Natural killer cell (primary cell): ENCODE measurements at regions of chr9 and their contacts with region 1.

Region 1: GRCh38 chr9:128771745-128772519 is at the start of gene ZER1:
- DNase-seq: peak; percentile 95 to 96
- ATAC-seq: peak; percentile 90 to 97 (median 93)
- H3K4me3 ChIP-seq: peak within 1 kb of the TSS; percentile 99
- H3K4me3 Mint-ChIP-seq: peak within 1 kb of the TSS; percentile 97
- H3K27ac ChIP-seq: peak within 1 kb of the TSS; percentile 95
- H3K27ac Mint-ChIP-seq: peak within 1 kb of the TSS; percentile 92 to 99
- H3K4me1 ChIP-seq: peaks cover 25% of the 10 kb centered on the region
- H3K4me1 Mint-ChIP-seq: peaks cover 28 to 34% of the 10 kb centered on the region in 2 donors
- H3K27me3 ChIP-seq: no peaks in the 10 kb centered on the region
- H3K27me3 Mint-ChIP-seq: peaks cover 0 to 5% of the 10 kb centered on the region in 2 donors
- CTCF ChIP-seq: no peak
- total RNA-seq, gene ZER1: 35.0 to 37.4 (median 35.2) TPM

Region 2: GRCh38 chr9:128753627-128754026 is 18.3 kb before region 1 on chr9:
- intact Hi-C with region 1: no loop called
- DNase-seq: no peak
- ATAC-seq: no peak
- H3K4me3 ChIP-seq: no peak overlapping the region
- H3K4me3 Mint-ChIP-seq: no peak overlapping the region
- H3K27ac ChIP-seq: no peak overlapping the region
- H3K27ac Mint-ChIP-seq: no peak overlapping the region
- H3K4me1 ChIP-seq: no peaks in the 10 kb centered on the region
- H3K4me1 Mint-ChIP-seq: peaks cover 6 to 8% of the 10 kb centered on the region in 2 donors
- H3K27me3 ChIP-seq: no peaks in the 10 kb centered on the region
- H3K27me3 Mint-ChIP-seq: no peaks in the 10 kb centered on the region
- CTCF ChIP-seq: no peak

Region 3: GRCh38 chr9:128786681-128787601 is 15.0 kb after region 1 on chr9 and contains the start of gene TBC1D13:
- intact Hi-C with region 1: loop called (anchors 1 kb)
- DNase-seq: peak; percentile 90 to 92
- ATAC-seq: peak; percentile 95 to 98 (median 98)
- H3K4me3 ChIP-seq: peak within 1 kb of the TSS; percentile 69
- H3K4me3 Mint-ChIP-seq: peak within 1 kb of the TSS; percentile 96
- H3K27ac ChIP-seq: peak within 1 kb of the TSS; percentile 66
- H3K27ac Mint-ChIP-seq: peak within 1 kb of the TSS; percentile 86 to 91
- H3K4me1 ChIP-seq: peaks cover 19% of the 10 kb centered on the region
- H3K4me1 Mint-ChIP-seq: peaks cover 17 to 32% of the 10 kb centered on the region in 2 donors
- H3K27me3 ChIP-seq: no peaks in the 10 kb centered on the region
- H3K27me3 Mint-ChIP-seq: no peaks in the 10 kb centered on the region
- CTCF ChIP-seq: no peak
- total RNA-seq, gene TBC1D13: 31.5 to 34.5 (median 33.7) TPM